ENCODE measurements at regions of chr7 and their contacts with region 1.

Region 1: DNA sequence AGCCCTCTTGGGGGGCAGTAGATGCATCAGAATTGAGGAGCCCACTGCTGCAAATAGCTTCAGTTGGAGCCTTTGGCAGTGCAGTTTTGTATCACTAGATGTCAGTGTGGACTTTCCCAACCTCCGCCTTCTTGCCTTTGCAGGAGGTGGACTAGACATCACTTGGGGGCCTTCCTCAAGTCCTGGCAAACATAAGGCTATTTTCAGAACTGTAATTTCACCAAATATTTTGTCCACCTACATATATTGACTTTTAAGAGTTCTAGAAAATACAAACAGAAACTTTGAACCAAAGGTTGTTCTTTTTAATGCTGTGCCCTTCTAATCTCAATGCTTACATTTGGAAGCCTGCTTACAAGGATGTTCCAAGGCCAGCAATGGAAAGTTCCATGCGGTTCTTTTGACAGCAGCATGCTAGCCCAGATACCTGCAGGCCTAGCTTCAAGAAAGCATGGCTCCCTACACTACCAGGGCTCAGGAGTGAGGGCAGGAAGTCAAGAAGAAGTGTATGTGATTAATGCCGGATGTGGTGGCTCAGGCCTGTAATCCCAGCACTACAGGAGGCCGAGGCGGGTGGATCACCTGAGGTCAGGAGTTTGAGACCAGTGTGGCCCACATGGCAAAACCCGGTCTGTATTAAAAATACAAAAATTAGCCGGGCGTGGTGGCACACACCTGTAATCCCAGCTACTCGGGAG is 8.0 kb upstream of the ZNRF2 start:
- DNase-seq: no peak
- ATAC-seq: peak; percentile 63

Region 2: GRCh38 chr7:30062591-30062990 is 213.8 kb before region 1 on chr7:
- intact Hi-C with region 1: no loop called
- DNase-seq: no peak
- ATAC-seq: peak; percentile 80

Region 3: DNA sequence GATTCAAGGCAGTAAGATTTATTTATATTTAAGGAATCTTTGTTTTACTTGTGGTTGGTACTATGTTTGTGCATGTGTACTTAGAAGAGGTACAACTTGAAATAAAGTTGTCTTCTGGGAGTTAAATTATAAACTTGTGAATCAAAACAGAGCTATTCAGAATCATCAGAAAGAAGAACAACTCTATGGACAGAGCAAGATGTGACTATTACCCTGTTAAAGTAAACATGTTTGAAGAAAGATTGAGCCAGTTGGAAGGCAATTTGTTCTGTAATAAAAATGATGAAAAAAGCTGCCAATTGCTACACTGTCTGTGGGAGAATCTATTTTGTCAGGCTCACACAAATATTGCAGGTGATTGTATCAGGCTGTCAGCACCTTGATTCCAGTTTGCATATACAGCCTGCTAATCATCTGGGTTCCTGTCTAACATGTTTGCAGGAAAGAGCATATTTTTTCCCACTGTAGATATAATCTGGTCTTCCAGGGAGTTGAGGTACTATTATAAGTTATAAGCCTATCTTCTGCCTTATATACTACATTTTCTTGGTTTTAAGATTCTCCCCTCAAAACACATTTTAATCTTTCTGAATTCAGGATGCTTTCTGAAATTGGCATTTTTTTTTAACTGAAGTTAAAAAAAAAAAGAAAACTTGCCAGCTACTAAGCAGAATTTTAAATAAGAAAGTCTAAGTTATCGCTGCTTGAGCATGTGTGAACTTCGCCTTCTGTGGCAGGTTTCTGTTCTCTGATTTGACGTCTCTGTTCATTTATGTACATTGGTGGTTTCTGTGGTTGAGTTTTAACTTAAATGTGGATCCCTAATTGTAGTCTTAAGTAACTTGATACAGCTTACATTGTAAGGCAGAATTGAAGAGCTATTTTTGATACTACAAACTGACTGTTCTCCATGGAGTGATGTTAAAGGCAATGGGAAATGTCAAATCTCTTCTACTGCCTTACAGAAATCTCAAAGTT is 54.1 kb after region 1 on chr7:
- intact Hi-C with region 1: no loop called
- DNase-seq: no peak
- ATAC-seq: no peak

Region 4: DNA sequence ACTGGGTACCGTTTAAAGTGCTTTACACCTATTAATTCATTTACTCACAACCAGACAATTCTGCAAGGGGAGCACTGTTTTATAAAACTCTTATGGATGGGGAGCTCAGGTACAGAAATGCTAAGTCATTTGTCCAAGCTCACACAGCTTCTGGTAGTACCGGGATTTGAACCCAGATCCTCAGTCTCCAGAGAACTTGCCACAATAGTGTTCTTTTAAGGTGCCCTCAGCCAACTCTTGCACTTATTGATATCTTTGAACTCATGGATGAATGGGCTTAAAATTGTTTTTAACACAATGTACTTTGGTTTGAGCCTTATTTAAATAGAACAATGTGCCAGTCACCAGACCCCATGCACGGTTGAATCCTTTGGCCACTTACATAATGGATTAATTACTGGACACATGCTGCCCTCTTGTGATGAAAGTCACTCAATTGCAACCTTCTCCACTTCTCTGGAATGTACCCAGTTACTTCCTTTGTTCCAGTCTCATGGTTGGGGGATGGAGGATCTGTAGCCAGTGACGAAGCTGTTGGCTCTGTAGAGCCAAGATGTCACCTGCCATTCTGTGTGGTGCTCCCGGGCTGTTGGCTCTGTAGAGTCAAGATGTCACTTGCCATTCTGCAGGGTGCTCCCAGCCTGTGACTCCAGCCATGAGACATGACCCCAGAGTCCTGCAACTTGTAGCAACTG is 136.6 kb after region 1 on chr7:
- intact Hi-C with region 1: loop called (anchors 2 kb)
- DNase-seq: no peak
- ATAC-seq: peak; percentile 94